ENCODE measurements at regions of chr14 and their contacts with region 1.

Region 1: GRCh38 chr14:69260861-69261564 is 1.1 kb downstream of the GALNT16 start:
- DNase-seq: no peak
- ATAC-seq: no peak
- H3K4me3 ChIP-seq: peak overlapping the region; percentile 57 to 89 (median 60)
- H3K27ac ChIP-seq: peak overlapping the region; percentile 24 to 56 (median 46)
- H3K4me1 ChIP-seq: peaks cover 5 to 7% of the 10 kb centered on the region in 2 donors
- H3K27me3 ChIP-seq: peaks cover 31 to 46% (median 41%) of the 10 kb centered on the region in 3 donors
- CTCF ChIP-seq: peak in 4 of 5 experiments; percentile 51 to 67 (median 57)
- POLR2A ChIP-seq: no peak

Region 2: DNA sequence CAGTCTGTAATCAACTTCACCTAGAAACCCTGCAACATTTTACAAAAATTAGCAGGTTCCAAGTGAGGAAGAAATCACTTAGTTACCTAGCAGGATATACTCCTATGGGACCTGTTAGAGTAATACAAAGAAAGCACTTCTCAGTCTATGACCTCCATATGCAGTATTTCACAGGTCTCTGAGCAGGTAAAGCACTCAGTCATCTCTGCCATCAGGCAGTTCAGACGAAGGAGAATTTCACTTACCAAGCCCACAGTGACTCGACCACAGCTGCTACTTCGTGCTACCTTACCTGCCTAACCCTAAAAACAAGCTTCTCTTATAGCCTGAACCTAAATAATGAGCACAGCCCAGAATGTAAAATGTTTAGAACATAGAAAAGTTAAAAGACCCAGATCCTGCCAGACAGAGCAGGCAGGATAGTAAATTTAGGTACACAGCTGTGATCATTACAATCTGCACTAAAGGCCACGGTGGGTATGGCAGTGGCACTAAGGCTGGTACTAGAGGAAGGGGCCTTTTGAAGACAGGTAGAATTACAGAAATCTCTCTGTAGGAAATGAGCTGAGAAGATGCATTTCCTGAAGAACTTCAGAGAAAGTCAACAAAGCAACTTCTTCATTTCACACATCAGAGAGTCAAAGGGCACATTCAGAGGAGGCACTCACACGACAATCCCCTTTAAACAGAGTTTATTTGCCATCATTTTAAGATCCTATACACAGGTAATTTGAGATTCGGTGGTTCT is 143.8 kb before region 1 on chr14:
- in situ Hi-C with region 1: no loop called
- intact Hi-C with region 1: no loop called
- DNase-seq: no peak
- ATAC-seq: no peak
- H3K4me3 ChIP-seq: no peak overlapping the region
- H3K27ac ChIP-seq: no peak overlapping the region
- H3K4me1 ChIP-seq: peaks cover 0 to 6% of the 10 kb centered on the region in 2 donors
- H3K27me3 ChIP-seq: no peaks in the 10 kb centered on the region
- CTCF ChIP-seq: no peak
- POLR2A ChIP-seq: no peak

Region 3: DNA sequence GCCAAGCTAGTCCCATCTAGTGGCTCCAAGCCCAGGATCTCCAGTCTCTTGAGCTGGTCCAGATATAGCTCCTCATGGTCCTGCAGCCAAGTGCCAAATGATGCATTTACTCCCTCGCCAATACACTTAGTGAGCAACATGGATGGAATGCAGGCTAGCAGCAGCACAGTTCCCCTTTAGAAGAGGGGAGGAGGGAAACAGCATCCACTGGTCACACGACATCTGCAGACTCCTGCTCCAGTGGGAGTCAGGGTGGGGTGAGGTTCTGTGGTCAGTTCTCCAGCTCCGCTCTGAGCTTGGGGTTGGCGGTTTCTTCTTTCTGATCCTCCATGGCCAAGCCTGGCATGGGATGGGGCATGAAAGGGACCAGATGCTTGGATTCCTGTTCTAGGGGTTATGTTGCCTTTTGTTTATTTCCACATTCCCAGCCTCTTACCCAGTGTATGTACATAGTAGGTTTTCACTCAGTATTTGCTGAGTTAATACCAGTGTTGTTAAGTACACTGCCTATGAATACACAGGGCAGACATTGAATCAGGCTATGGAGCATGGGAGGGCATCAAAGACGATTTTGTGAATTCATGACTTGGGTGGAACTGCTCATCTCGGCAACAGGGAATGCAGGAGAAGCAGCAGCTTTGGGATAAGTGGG is 56.2 kb after region 1 on chr14:
- in situ Hi-C with region 1: no loop called
- intact Hi-C with region 1: loop called (anchors 5 kb)
- DNase-seq: peak; percentile 39 to 72
- ATAC-seq: peak; percentile 88 to 90
- H3K4me3 ChIP-seq: no peak overlapping the region
- H3K27ac ChIP-seq: peak overlapping the region in 3 of 4 donors; percentile 51 to 66 (median 52)
- H3K4me1 ChIP-seq: peaks cover 0 to 11% of the 10 kb centered on the region in 2 donors
- H3K27me3 ChIP-seq: no peaks in the 10 kb centered on the region
- CTCF ChIP-seq: no peak
- POLR2A ChIP-seq: no peak